WTC11 (cell line): ENCODE measurements at regions of chr3 and their contacts with region 1.

Region 1: DNA sequence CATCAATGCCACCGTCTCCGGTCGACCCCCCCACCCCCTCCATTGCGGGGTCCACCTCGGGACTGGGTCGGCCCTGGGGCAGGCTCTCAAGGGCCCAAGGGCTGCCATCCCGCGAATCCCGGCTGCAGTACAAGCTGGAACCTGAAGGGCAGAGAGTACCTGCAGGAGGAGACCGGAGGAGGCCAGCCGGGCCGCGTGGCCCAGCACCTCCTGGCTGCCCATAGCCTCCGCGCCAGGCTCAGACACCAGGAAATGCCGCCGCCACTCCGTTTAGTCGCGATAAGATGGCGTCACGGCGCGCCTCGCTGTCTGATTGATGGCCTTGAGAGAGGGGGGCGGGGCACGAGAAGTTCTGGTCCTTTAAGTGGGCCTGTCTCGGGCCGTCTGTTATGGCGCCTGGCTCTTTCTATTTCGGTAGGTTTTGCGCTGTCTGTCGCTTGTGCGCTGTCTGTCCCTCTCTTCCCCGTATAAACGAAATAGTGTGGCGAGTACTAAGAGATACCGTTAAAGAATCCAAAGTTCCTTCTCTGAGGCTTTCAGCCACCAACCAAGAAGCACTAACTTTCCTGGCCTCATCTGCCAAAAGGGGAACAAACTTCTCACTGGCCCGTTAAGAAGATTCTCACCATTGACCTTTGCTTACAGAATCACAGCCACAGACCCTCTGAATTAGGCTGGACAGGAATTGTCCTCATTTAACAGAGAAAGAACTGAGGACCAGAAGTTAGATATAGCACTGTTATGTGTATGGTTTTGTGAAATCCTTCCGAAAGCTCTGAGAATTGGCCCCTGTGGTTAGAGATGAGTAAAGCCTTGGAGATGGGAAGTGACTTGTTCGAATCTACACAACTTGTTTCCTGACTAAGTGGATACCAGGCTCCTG is at the start of gene RFT1:
- DNase-seq: peak; percentile 98
- ATAC-seq: peak; percentile 80
- H3K4me3 Mint-ChIP-seq: peak within 1 kb of the TSS; percentile 85
- H3K27ac Mint-ChIP-seq: peak within 1 kb of the TSS; percentile 92
- H3K4me1 Mint-ChIP-seq: peaks cover 12% of the 10 kb centered on the region
- H3K27me3 Mint-ChIP-seq: no peaks in the 10 kb centered on the region
- CTCF ChIP-seq: no peak
- total RNA-seq, gene RFT1: 26.3 to 28.0 TPM (median 27.1 TPM) in 3 replicates

Region 2: DNA sequence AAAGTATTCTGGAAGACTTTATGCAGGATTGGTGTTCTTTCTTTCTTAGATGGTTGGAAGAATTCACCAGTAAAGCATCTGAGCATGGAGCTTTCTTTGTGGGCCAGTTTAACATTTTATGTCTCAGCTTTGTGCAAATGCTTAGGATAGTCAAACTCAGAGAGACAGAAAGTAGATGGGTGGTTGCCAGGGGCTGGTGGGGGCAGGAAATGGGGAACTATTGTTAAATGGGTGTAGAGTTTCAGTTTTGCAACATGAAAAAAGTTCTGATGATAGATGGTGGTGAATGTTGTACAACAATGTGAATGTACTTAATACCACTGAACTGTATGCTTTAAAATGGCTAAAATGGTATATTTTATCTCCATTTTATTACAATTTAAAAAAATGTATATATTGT is 399.7 kb before region 1 on chr3:
- CTCF ChIA-PET with region 1: no interaction called
- POLR2A ChIA-PET with region 1: no interaction called
- DNase-seq: no peak
- ATAC-seq: no peak
- H3K4me3 Mint-ChIP-seq: no peak overlapping the region
- H3K27ac Mint-ChIP-seq: no peak overlapping the region
- H3K4me1 Mint-ChIP-seq: no peaks in the 10 kb centered on the region
- H3K27me3 Mint-ChIP-seq: no peaks in the 10 kb centered on the region
- CTCF ChIP-seq: no peak

Region 3: GRCh38 chr3:53114011-53114400 is 16.4 kb before region 1 on chr3:
- CTCF ChIA-PET with region 1: interaction called, 19 read pairs
- POLR2A ChIA-PET with region 1: no interaction called
- DNase-seq: peak; percentile 85
- ATAC-seq: peak; percentile 87
- H3K4me3 Mint-ChIP-seq: no peak overlapping the region
- H3K27ac Mint-ChIP-seq: no peak overlapping the region
- H3K4me1 Mint-ChIP-seq: no peaks in the 10 kb centered on the region; the same call in 1 of the 2 replicates
- H3K27me3 Mint-ChIP-seq: no peaks in the 10 kb centered on the region
- CTCF ChIP-seq: peak; percentile 95

Region 4: GRCh38 chr3:53160660-53161449 is 30.4 kb after region 1 on chr3 and contains the start of gene PRKCD:
- CTCF ChIA-PET with region 1: interaction called, 27 read pairs
- POLR2A ChIA-PET with region 1: interaction called, 3 read pairs
- DNase-seq: peak; percentile 81
- ATAC-seq: peak; percentile 76
- H3K4me3 Mint-ChIP-seq: peak within 1 kb of the TSS; percentile 86
- H3K27ac Mint-ChIP-seq: no peak within 1 kb of the TSS
- H3K4me1 Mint-ChIP-seq: peaks cover 40% of the 10 kb centered on the region
- H3K27me3 Mint-ChIP-seq: peaks cover 18% of the 10 kb centered on the region
- CTCF ChIP-seq: no peak
- total RNA-seq, gene PRKCD: 16.7 to 19.2 TPM (median 18.0 TPM) in 3 replicates

Region 5: GRCh38 chr3:53170325-53171063 is 40.1 kb after region 1 on chr3:
- CTCF ChIA-PET with region 1: interaction called, 11 read pairs
- POLR2A ChIA-PET with region 1: no interaction called
- DNase-seq: no peak
- ATAC-seq: no peak
- H3K4me3 Mint-ChIP-seq: no peak overlapping the region
- H3K27ac Mint-ChIP-seq: peak overlapping the region; percentile 81; the same call in 1 of the 2 replicates
- H3K4me1 Mint-ChIP-seq: peaks cover 55% of the 10 kb centered on the region
- H3K27me3 Mint-ChIP-seq: no peaks in the 10 kb centered on the region
- CTCF ChIP-seq: no peak